ENCODE measurements at regions of chr11 and their contacts with region 1.

Region 1: GRCh38 chr11:60363542-60364510 is 14.5 kb upstream of the MS4A7 start:
- DNase-seq: peak; percentile 45 to 53
- ATAC-seq: peak; percentile 90 to 92
- H3K4me3 ChIP-seq: no peak overlapping the region
- H3K27ac ChIP-seq: no peak overlapping the region
- H3K4me1 ChIP-seq: no peaks in the 10 kb centered on the region
- CTCF ChIP-seq: peak; percentile 74
- EP300 ChIP-seq: no peak
- POLR2A ChIP-seq: no peak
- RAD21 ChIP-seq: peak; percentile 62 to 63

Region 2: DNA sequence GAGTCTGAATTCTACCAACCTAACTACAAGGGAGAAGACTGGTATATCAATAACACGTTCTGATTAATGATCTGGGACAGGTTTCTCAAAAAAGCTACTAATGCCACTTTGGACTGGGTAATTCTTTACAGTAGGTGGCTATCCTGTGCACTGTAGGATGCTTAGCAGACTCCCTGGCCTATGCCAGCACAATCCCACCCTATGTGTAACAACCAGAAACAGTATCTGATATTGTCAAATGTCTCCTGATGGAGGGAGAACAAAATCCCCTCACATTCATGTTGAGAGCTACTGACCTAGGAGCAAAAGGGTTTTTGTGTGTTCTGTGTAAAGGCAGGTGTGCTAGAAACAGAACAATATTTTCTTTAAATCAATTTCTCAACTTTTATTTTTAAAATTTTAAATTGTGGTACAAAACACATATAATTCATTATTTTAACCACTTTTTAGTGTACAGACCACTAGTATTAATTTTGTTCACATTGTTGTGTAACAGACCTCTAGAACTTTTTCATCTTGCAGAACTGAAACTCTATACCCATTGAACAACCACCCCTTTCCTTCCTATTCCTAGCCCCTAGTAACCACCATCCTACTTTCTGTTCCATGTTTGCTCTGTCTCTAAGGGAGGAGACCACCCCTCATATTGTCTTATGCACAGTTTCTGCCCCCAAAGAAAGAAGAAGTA is 178.9 kb before region 1 on chr11:
- CTCF ChIA-PET with region 1: no interaction called
- POLR2A ChIA-PET with region 1: no interaction called
- DNase-seq: no peak
- ATAC-seq: no peak
- H3K4me3 ChIP-seq: no peak overlapping the region
- H3K27ac ChIP-seq: no peak overlapping the region
- H3K4me1 ChIP-seq: no peaks in the 10 kb centered on the region
- CTCF ChIP-seq: no peak
- EP300 ChIP-seq: no peak
- POLR2A ChIP-seq: no peak
- RAD21 ChIP-seq: no peak

Region 3: GRCh38 chr11:60345489-60345888 is 18.3 kb before region 1 on chr11:
- CTCF ChIA-PET with region 1: interaction called, 18 read pairs
- POLR2A ChIA-PET with region 1: no interaction called
- DNase-seq: peak in 1 of 2 experiments; percentile 6
- ATAC-seq: peak in 1 of 2 experiments; percentile 51; a peak in 1 of 6 replicates
- H3K4me3 ChIP-seq: no peak overlapping the region
- H3K27ac ChIP-seq: no peak overlapping the region
- H3K4me1 ChIP-seq: no peaks in the 10 kb centered on the region
- CTCF ChIP-seq: no peak
- EP300 ChIP-seq: no peak
- POLR2A ChIP-seq: no peak
- RAD21 ChIP-seq: no peak

Region 4: DNA sequence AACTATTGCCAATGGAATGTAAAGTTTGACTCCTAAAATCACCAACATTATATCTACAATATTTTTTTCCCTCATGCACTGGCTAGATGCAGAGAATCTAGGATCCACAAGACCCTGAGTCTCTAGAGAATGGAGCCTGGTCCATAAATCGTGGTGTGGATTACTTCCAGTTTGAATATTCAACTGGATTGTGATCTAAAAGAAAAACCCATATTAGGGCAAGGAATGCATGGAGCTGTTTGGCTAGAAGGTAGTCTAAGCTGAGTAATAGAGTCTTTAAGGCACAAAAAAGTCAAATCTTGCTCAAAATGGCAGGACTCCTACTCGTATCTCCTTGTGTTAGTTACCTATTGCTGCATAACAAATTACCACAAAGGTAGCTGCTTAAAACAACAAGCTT is 56.2 kb after region 1 on chr11:
- CTCF ChIA-PET with region 1: no interaction called
- POLR2A ChIA-PET with region 1: no interaction called
- DNase-seq: no peak
- ATAC-seq: no peak
- H3K4me3 ChIP-seq: no peak overlapping the region
- H3K27ac ChIP-seq: no peak overlapping the region
- H3K4me1 ChIP-seq: no peaks in the 10 kb centered on the region
- CTCF ChIP-seq: no peak
- EP300 ChIP-seq: no peak
- POLR2A ChIP-seq: no peak
- RAD21 ChIP-seq: no peak